Head of caudate nucleus (tissue), 42 donors: ENCODE measurements at regions of chr11 and their contacts with region 1.

Region 1: GRCh38 chr11:62771144-62772021 is at the start of gene TAF6L:
- DNase-seq: peak; percentile 96 to 100 (median 98)

Region 2: GRCh38 chr11:62757846-62758788 is 13.3 kb before region 1 on chr11:
- intact Hi-C with region 1: loop called (anchors 1 kb)
- DNase-seq: no peak